Endothelial cell of umbilical vein (primary cell): ENCODE measurements at regions of chr1 and their contacts with region 1.

Region 1: DNA sequence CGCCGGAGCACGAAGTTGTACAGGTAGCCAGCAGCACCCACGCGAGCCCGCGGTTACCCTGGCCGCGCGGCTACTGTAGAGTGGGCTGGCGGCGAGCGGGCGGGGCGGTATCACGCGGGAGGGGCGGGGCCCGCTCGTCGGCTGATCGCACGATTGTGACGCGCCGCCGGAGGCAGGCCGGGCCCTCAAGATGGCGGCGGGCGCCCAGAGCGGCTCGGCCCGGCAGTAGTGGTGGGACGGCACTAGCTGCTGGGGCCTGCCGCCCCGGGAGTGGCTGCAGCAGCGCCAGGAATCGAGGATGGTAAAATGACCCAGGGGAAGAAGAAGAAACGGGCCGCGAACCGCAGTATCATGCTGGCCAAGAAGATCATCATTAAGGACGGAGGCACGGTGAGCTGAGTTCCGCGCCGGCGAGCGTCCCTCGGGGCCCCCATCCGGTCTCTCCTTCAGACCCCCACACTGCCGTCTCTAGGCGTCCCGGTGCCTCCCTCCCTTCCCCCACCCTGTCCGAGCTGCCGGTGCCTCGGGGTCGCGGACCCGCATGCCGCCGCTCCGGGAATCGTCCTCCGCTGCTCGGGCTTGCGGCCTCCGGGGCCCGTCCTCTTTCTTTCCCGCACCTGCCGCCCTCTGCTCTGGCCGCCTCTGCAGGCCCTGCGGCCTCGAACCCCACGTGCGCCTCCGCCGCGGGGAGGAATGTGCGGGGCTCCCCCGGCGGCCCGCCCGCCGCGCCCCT is 68.3 kb downstream of the SLC35A3 start:
- DNase-seq: peak; percentile 87
- H3K4me3 ChIP-seq: peak overlapping the region; percentile 80 to 99 (median 95)
- H3K27ac ChIP-seq: peak overlapping the region; percentile 96
- H3K4me1 ChIP-seq: peaks cover 24% of the 10 kb centered on the region
- H3K27me3 ChIP-seq: no peaks in the 10 kb centered on the region
- CTCF ChIP-seq: no peak
- POLR2A ChIP-seq: peak; percentile 96

Region 2: DNA sequence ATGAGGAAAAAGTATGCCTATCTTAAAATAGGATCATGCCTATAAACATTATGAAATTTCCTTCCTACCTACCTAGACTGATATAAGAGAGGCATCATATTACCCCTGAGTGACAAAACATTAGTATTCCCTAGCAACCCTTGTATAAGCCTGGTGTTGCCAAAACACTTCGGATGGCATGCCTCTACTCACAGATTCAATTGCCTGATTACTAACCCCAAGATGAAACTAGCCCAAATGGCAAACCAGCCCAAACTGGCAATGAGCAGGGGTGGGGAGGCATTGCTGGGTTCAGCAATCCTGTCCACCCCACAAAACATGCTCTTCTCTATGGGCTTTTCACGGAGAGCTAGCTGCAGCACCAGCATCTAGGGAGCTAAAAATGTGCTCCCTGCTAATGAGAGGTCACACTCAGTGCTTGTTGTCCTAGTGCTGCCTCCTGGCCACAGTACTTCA is 378.3 kb before region 1 on chr1:
- CTCF ChIA-PET with region 1: no interaction called
- POLR2A ChIA-PET with region 1: no interaction called
- dilution Hi-C with region 1: no loop called
- intact Hi-C with region 1: loop called (anchors 10 kb)
- DNase-seq: peak; percentile 91
- H3K4me3 ChIP-seq: no peak overlapping the region
- H3K27ac ChIP-seq: peak overlapping the region; percentile 62
- H3K4me1 ChIP-seq: peaks cover 81% of the 10 kb centered on the region
- H3K27me3 ChIP-seq: no peaks in the 10 kb centered on the region
- CTCF ChIP-seq: no peak
- POLR2A ChIP-seq: no peak

Region 3: GRCh38 chr1:99808391-99809115 is 229.5 kb before region 1 on chr1:
- CTCF ChIA-PET with region 1: interaction called, 8 read pairs
- POLR2A ChIA-PET with region 1: interaction called, 3 read pairs
- dilution Hi-C with region 1: no loop called
- intact Hi-C with region 1: loop called (anchors 1 kb)
- DNase-seq: peak; percentile 87
- H3K4me3 ChIP-seq: peak overlapping the region in 1 of 3 experiments; percentile 15
- H3K27ac ChIP-seq: no peak overlapping the region
- H3K4me1 ChIP-seq: peaks cover 8% of the 10 kb centered on the region
- H3K27me3 ChIP-seq: peaks cover 15 to 21% of the 10 kb centered on the region in 2 experiments
- CTCF ChIP-seq: peak; percentile 23 to 41
- POLR2A ChIP-seq: no peak

Region 4: DNA sequence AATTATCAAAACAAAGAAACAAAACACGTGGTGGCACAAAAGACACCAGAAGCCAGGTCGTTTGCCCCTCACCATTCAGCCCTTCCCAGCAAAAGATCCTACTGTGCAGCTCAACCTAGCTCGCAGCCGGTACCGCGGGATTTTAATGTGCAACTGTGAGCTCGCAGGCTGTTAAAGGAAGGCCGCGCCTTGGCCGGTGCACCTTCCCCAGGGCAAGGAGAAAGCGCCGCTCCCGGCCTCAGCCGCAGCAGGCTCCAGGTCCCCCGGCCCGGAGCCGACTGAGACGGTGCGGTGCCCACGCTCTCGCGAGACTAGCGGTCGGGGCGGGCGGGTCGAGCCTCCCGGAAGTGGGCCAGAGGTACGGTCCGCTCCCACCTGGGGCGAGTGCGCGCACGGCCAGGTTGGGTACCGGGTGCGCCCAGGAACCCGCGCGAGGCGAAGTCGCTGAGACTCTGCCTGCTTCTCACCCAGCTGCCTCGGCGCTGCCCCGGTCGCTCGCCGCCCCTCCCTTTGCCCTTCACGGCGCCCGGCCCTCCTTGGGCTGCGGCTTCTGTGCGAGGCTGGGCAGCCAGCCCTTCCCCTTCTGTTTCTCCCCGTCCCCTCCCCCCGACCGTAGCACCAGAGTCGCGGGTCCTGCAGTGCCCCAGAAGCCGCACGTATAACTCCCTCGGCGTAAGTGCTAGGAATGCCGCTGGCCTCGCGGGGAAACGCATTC is 188.2 kb before region 1 on chr1 and contains the start of gene AGL:
- CTCF ChIA-PET with region 1: no interaction called
- POLR2A ChIA-PET with region 1: no interaction called
- dilution Hi-C with region 1: no loop called
- intact Hi-C with region 1: loop called (anchors 1 kb)
- DNase-seq: peak; percentile 85
- H3K4me3 ChIP-seq: peak within 1 kb of the TSS; percentile 80 to 99 (median 97)
- H3K27ac ChIP-seq: peak within 1 kb of the TSS; percentile 26
- H3K4me1 ChIP-seq: peaks cover 7% of the 10 kb centered on the region
- H3K27me3 ChIP-seq: no peaks in the 10 kb centered on the region
- CTCF ChIP-seq: no peak
- POLR2A ChIP-seq: peak; percentile 93
- total RNA-seq, gene AGL: 10.5 and 10.7 TPM in 2 replicates

Region 5: GRCh38 chr1:100077531-100077930 is 39.4 kb after region 1 on chr1:
- CTCF ChIA-PET with region 1: no interaction called
- POLR2A ChIA-PET with region 1: no interaction called
- dilution Hi-C with region 1: no loop called
- intact Hi-C with region 1: no loop called
- DNase-seq: peak; percentile 89
- H3K4me3 ChIP-seq: no peak overlapping the region
- H3K27ac ChIP-seq: peak overlapping the region; percentile 16
- H3K4me1 ChIP-seq: peaks cover 4% of the 10 kb centered on the region
- H3K27me3 ChIP-seq: no peaks in the 10 kb centered on the region
- CTCF ChIP-seq: no peak
- POLR2A ChIP-seq: no peak

Region 6: DNA sequence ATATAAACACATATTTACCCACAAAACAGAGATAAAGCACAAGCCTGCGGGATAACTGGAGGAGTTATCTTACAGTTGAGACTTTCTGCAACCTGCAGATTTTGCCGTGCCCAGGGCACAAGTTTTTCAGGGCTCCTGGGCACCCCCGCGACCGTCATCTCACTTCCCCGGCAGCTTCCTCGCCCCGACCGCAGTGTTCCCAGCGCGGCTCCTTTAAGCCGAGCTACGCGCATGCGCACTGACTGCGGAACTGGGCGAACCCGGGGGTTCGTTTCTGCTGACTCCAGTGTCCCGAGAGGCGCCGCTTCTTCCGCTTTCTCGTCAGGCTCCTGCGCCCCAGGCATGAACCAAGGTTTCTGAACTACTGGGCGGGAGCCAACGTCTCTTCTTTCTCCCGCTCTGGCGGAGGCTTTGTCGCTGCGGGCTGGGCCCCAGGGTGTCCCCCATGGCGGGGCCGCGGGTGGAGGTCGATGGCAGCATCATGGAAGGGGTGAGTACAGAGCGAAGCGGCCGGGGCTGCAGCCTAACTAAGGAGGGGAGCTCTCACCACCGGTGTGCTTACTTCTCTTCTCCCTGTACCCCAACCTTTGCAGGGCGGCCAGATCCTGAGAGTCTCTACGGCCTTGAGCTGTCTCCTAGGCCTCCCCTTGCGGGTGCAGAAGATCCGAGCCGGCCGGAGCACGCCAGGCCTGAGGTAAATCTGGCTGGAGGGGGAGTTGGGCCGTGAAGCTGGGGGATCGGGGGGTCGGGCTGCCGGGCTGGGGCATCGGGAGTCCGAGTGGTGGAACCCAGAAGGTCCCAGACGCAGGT is 228.0 kb after region 1 on chr1 and contains the start of gene RTCA:
- CTCF ChIA-PET with region 1: no interaction called
- POLR2A ChIA-PET with region 1: no interaction called
- dilution Hi-C with region 1: no loop called
- intact Hi-C with region 1: loop called (anchors 2 kb)
- DNase-seq: peak; percentile 92
- H3K4me3 ChIP-seq: peak within 1 kb of the TSS; percentile 67 to 92 (median 86)
- H3K27ac ChIP-seq: peak within 1 kb of the TSS; percentile 41
- H3K4me1 ChIP-seq: peaks cover 19% of the 10 kb centered on the region
- H3K27me3 ChIP-seq: no peaks in the 10 kb centered on the region
- CTCF ChIP-seq: no peak
- POLR2A ChIP-seq: peak; percentile 90
- total RNA-seq, gene RTCA: 44.8 and 46.6 TPM in 2 replicates